ENCODE measurements at regions of chr14 and their contacts with region 1.

Region 1: GRCh38 chr14:69129264-69129880 is 23.5 kb downstream of the DCAF5 start:
- DNase-seq: peak; percentile 84
- ATAC-seq: peak; percentile 77
- H3K4me3 ChIP-seq: no peak overlapping the region
- H3K27ac ChIP-seq: 0 out of 2 replicates have a peak overlapping the region, but pooled peaks have one; percentile 6
- H3K4me1 ChIP-seq: peaks cover 34% of the 10 kb centered on the region
- H3K27me3 ChIP-seq: no peaks in the 10 kb centered on the region
- CTCF ChIP-seq: peak; percentile 98

Region 2: GRCh38 chr14:68932686-68933085 is 196.7 kb before region 1 on chr14:
- CTCF ChIA-PET with region 1: no interaction called
- POLR2A ChIA-PET with region 1: no interaction called
- intact Hi-C with region 1: no loop called
- DNase-seq: no peak
- ATAC-seq: no peak
- H3K4me3 ChIP-seq: no peak overlapping the region
- H3K27ac ChIP-seq: no peak overlapping the region
- H3K4me1 ChIP-seq: peaks cover 2% of the 10 kb centered on the region
- H3K27me3 ChIP-seq: no peaks in the 10 kb centered on the region
- CTCF ChIP-seq: no peak

Region 3: GRCh38 chr14:68961781-68962584 is 167.4 kb before region 1 on chr14:
- CTCF ChIA-PET with region 1: no interaction called
- POLR2A ChIA-PET with region 1: no interaction called
- intact Hi-C with region 1: no loop called
- DNase-seq: peak; percentile 93
- ATAC-seq: peak; percentile 70
- H3K4me3 ChIP-seq: no peak overlapping the region
- H3K27ac ChIP-seq: peak overlapping the region; percentile 57
- H3K4me1 ChIP-seq: peaks cover 51% of the 10 kb centered on the region
- H3K27me3 ChIP-seq: no peaks in the 10 kb centered on the region
- CTCF ChIP-seq: no peak

Region 4: GRCh38 chr14:69191340-69192111 is 62.2 kb after region 1 on chr14 and contains the start of gene EXD2:
- CTCF ChIA-PET with region 1: interaction called, 4 read pairs
- POLR2A ChIA-PET with region 1: interaction called, 4 read pairs
- intact Hi-C with region 1: loop called (anchors 1 kb)
- DNase-seq: peak; percentile 95
- ATAC-seq: peak; percentile 97
- H3K4me3 ChIP-seq: peak within 1 kb of the TSS; percentile 84
- H3K27ac ChIP-seq: peak within 1 kb of the TSS; percentile 56
- H3K4me1 ChIP-seq: peaks cover 13% of the 10 kb centered on the region
- H3K27me3 ChIP-seq: no peaks in the 10 kb centered on the region
- CTCF ChIP-seq: no peak
- total RNA-seq, gene EXD2: 19.0 and 19.9 TPM in 2 replicates

Region 5: GRCh38 chr14:69242311-69243224 is 113.2 kb after region 1 on chr14:
- CTCF ChIA-PET with region 1: interaction called, 11 read pairs
- POLR2A ChIA-PET with region 1: interaction called, 5 read pairs
- intact Hi-C with region 1: loop called (anchors 1 kb)
- DNase-seq: peak; percentile 79
- ATAC-seq: peak; percentile 89
- H3K4me3 ChIP-seq: no peak overlapping the region
- H3K27ac ChIP-seq: no peak overlapping the region
- H3K4me1 ChIP-seq: no peaks in the 10 kb centered on the region
- H3K27me3 ChIP-seq: no peaks in the 10 kb centered on the region
- CTCF ChIP-seq: peak; percentile 93

Region 6: DNA sequence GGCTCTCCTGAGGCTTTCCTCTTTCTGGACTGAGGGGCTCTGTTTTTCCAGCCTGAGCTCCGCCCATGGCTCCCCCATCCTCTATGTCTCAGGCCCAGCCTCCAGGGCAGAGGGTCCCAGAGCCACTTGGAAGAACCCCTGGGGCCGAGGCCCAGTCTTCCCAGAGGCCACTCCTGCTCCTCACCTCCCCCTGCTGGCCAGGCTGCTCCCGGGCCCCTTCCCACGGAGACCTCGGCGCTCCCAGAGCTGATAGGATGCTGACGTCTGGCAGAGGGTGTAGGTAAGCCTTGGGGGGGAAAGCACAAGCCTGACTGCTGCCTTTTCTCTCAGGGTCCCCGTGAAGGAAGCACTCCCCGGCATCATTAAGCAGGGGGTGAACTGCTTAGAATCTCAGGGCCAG is 217.3 kb after region 1 on chr14:
- CTCF ChIA-PET with region 1: interaction called, 3 read pairs
- POLR2A ChIA-PET with region 1: no interaction called
- intact Hi-C with region 1: loop called (anchors 5 kb)
- DNase-seq: peak; percentile 42
- ATAC-seq: peak; percentile 68
- H3K4me3 ChIP-seq: no peak overlapping the region
- H3K27ac ChIP-seq: no peak overlapping the region
- H3K4me1 ChIP-seq: no peaks in the 10 kb centered on the region
- H3K27me3 ChIP-seq: no peaks in the 10 kb centered on the region
- CTCF ChIP-seq: peak; percentile 85